ENCODE measurements at regions of chr18 and their contacts with region 1.

Region 1: DNA sequence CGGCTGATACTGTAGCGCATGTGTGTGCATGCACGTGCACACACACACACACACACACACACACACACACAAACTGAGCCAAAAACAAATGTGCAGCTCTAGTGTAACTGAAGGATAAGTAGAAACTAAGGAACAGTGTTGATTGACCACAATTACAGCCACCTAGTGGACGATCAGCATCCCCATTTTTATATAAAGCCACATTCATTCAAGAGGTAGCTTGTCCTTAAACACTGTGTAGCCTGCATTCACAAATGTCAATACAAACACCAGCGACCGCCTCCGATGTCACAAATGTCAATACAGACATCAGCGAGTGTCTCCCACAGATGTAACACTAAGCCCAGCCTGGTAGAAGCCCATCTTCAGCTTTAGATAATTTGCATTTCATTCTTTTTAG is 167.4 kb downstream of the PTGR3 start:
- DNase-seq: no peak

Region 2: GRCh38 chr18:74806700-74807416 is 234.7 kb before region 1 on chr18:
- intact Hi-C with region 1: loop called (anchors 10 kb)
- DNase-seq: no peak

Region 3: DNA sequence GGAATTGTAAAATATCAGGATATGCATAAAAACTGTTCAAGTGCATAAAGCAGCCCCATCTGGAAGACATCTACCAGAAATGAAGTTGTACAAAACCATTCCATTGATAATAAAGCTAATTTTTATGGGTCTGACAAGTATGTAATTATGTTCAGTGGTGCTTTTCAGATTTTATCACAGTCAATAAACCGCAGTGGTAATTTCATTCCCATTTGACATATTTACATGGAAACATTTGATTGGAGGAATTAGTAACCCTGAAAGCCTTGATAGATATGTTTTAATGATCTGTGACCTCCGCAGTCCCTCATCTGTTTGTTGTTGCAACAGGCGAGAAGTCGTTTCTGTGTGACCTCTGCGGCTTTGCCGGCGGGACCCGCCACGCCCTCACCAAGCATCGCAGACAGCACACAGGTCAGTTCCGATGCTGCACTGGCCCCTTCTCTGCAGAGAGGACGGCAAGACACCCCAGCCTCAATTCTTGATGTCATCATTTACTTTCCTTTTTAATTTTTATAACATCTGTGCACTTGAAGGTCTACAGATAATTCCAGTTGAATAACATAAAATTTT is 160.8 kb before region 1 on chr18:
- intact Hi-C with region 1: no loop called
- DNase-seq: no peak

Region 4: DNA sequence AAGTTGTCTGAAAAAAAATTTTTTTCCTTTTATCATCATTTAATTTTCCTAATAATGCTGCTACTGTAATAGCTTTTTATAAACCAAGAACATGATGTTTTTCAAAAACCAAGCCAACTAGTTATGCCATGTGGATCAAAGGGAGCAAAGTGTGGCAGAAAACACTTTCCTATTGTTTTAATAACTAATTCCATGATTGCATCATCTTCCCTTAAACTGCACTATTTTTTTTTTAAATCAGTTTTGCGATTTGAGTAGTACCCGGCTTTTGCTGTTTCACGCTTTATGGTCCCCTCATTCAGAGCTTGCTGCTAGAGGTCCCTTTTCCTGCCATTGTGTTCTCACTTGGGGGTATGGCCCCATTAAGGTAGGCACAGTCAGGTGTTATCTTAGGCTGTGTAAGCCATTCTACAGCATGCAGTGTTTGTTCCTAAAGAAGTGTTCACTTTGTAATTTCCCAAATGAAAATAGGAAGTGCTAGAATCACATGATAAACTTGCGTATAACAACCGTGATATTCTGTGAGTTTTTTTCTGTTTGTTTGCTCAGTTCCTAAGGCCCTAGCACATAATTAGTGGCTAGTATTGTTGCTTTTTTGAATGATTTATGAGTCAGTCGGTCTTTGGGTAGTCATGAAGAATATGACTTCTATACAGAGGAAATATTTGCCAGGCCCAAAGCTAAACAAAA is 58.5 kb before region 1 on chr18:
- intact Hi-C with region 1: no loop called
- DNase-seq: no peak

Measured in cardiac septum (tissue), 1 donor.